Activated T-helper 1 cell treated with anti-CD3 and anti-CD28 coated beads, Interleukin-12 subunit alpha, Interleukin-12 subunit beta, Interleukin-2, Interleukin-4 antibody, amounts not matched to agents 30 ng/mL and 10 ng/mL and 1 ng/mL, durations not matched to agents 14 hours and 24 hours and 36 hours (primary cell): ENCODE measurements at regions of chr2 and their contacts with region 1.

Region 1: GRCh38 chr2:178914259-178914849 is 107.1 kb upstream of the TTN start:
- DNase-seq: peak; percentile 54
- H3K4me3 Mint-ChIP-seq: no peak overlapping the region
- H3K27ac Mint-ChIP-seq: no peak overlapping the region
- H3K4me1 Mint-ChIP-seq: no peaks in the 10 kb centered on the region
- H3K27me3 Mint-ChIP-seq: no peaks in the 10 kb centered on the region

Region 2: GRCh38 chr2:178700922-178701342 is 213.4 kb before region 1 on chr2:
- intact Hi-C with region 1: loop called (anchors 2 kb)
- DNase-seq: no peak
- H3K4me3 Mint-ChIP-seq: no peak overlapping the region
- H3K27ac Mint-ChIP-seq: no peak overlapping the region
- H3K4me1 Mint-ChIP-seq: peaks cover 5% of the 10 kb centered on the region
- H3K27me3 Mint-ChIP-seq: peaks cover 3% of the 10 kb centered on the region

Region 3: DNA sequence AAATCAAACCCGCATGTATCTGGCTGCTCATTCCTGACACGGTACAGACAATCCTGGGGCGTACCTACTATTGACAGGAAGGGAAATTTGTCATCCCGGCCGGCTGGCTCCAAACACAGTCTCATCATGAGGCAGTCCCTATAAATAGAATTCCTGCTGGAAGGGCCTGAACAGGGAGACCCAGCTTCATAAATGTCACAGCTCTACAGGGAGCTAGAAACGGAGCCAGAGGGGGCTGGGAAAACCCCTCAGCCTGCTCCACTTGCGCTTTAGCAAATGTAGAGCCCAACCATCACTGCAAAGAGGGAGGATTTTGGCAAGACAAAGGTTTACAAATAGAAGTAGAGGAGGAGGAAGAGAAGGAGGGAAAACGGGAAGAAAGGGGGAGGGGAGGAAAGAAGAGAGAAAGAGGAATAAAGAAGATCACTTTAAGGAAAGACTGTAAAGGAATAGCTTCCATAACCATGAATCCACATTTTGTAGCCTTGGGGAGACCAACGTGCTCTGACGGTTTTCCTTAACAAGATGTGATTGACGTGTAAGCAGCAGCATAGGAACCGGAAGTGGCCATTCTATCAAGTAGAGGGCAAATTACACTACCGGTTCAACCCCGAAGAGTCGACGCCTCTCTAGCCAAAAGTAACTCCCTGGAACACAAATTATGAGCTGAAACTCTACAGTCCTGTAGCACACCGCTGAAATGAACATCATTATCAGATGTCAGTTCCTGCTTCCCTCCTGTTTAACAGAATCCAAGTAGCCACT is 50.3 kb before region 1 on chr2:
- intact Hi-C with region 1: no loop called
- DNase-seq: no peak
- H3K4me3 Mint-ChIP-seq: no peak overlapping the region
- H3K27ac Mint-ChIP-seq: no peak overlapping the region
- H3K4me1 Mint-ChIP-seq: no peaks in the 10 kb centered on the region
- H3K27me3 Mint-ChIP-seq: peaks cover 2% of the 10 kb centered on the region

Region 4: DNA sequence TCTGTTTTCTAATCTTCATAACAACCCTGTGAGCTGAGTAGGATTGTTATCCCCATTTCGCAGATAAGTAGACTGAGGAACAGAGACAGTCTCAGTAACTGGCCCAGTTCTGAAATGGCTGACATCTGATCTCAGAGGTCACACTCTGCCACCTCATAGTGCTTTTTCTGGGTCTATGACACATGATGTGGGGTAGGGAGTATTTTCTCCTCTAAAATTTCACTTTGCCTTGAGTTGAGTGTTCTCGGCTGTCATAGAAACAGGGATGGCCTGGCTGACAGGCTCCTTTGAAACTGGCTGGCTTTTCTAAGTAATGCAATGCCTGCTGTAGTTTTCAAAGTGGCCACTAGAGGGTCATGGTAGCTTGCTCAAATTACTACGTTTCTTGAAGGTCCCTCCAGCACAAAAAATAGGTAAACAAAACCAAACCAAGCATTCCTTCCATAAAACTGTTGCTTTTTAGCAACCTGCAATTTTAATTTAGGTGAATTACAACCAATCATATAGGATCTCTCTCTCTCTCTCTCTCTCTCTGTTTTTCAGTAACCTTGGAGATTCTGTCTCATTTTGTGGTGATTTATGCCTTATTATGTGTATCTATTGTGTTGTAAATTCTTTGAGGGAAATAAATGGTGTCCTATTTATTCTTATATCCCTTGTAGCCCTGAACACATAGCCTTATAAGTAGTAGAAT is 22.9 kb before region 1 on chr2:
- intact Hi-C with region 1: loop called (anchors 1 kb)
- DNase-seq: peak; percentile 45
- H3K4me3 Mint-ChIP-seq: no peak overlapping the region
- H3K27ac Mint-ChIP-seq: no peak overlapping the region
- H3K4me1 Mint-ChIP-seq: no peaks in the 10 kb centered on the region
- H3K27me3 Mint-ChIP-seq: peaks cover 2% of the 10 kb centered on the region

Region 5: GRCh38 chr2:179129574-179130238 is 215.4 kb after region 1 on chr2:
- intact Hi-C with region 1: loop called (anchors 1 kb)
- DNase-seq: no peak
- H3K4me3 Mint-ChIP-seq: no peak overlapping the region
- H3K27ac Mint-ChIP-seq: no peak overlapping the region
- H3K4me1 Mint-ChIP-seq: no peaks in the 10 kb centered on the region
- H3K27me3 Mint-ChIP-seq: no peaks in the 10 kb centered on the region